ENCODE measurements at regions of chr6 and their contacts with region 1.

Region 1: GRCh38 chr6:50816115-50816675 is 2.5 kb upstream of the TFAP2B start:
- DNase-seq: peak; percentile 43
- H3K4me3 Mint-ChIP-seq: peak overlapping the region; percentile 83
- H3K27ac Mint-ChIP-seq: no peak overlapping the region
- H3K4me1 Mint-ChIP-seq: peaks cover 10% of the 10 kb centered on the region
- H3K27me3 Mint-ChIP-seq: peaks cover 46% of the 10 kb centered on the region

Region 2: GRCh38 chr6:50724381-50725124 is 91.6 kb before region 1 on chr6:
- intact Hi-C with region 1: loop called (anchors 2 kb)
- DNase-seq: no peak
- H3K4me3 Mint-ChIP-seq: no peak overlapping the region
- H3K27ac Mint-ChIP-seq: no peak overlapping the region
- H3K4me1 Mint-ChIP-seq: peaks cover 5% of the 10 kb centered on the region
- H3K27me3 Mint-ChIP-seq: peaks cover 45% of the 10 kb centered on the region

Region 3: GRCh38 chr6:50843842-50844241 is 27.6 kb after region 1 on chr6:
- intact Hi-C with region 1: loop called (anchors 1 kb)
- DNase-seq: no peak
- H3K4me3 Mint-ChIP-seq: no peak overlapping the region
- H3K27ac Mint-ChIP-seq: no peak overlapping the region
- H3K4me1 Mint-ChIP-seq: no peaks in the 10 kb centered on the region
- H3K27me3 Mint-ChIP-seq: peaks cover 89% of the 10 kb centered on the region

Region 4: GRCh38 chr6:50853934-50854333 is 37.7 kb after region 1 on chr6:
- intact Hi-C with region 1: no loop called
- DNase-seq: no peak
- H3K4me3 Mint-ChIP-seq: no peak overlapping the region
- H3K27ac Mint-ChIP-seq: no peak overlapping the region
- H3K4me1 Mint-ChIP-seq: no peaks in the 10 kb centered on the region
- H3K27me3 Mint-ChIP-seq: peaks cover 32% of the 10 kb centered on the region

Region 5: DNA sequence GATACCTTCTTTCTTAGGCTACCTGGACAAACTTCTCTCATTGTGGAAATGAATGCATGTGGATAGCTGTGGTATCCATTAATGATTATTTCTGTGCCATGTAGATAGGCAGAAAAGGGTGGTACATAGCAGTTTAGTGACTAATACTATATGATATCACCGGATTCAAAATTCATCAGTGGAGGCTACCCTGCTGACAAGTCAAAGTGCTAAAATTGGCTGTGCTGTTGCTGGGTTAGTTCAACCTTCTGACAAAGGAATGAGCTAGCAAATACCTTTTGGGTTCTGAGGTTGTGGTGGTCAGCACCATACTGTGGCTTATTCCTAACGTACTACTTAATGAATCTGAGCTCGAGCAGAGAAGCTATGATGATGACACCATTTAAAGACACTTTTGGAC is 111.6 kb after region 1 on chr6:
- intact Hi-C with region 1: no loop called
- DNase-seq: no peak
- H3K4me3 Mint-ChIP-seq: no peak overlapping the region
- H3K27ac Mint-ChIP-seq: no peak overlapping the region
- H3K4me1 Mint-ChIP-seq: no peaks in the 10 kb centered on the region
- H3K27me3 Mint-ChIP-seq: no peaks in the 10 kb centered on the region

Region 6: GRCh38 chr6:51350308-51350904 is 534.2 kb after region 1 on chr6:
- intact Hi-C with region 1: loop called (anchors 5 kb)
- DNase-seq: no peak
- H3K4me3 Mint-ChIP-seq: no peak overlapping the region
- H3K27ac Mint-ChIP-seq: no peak overlapping the region
- H3K4me1 Mint-ChIP-seq: no peaks in the 10 kb centered on the region
- H3K27me3 Mint-ChIP-seq: no peaks in the 10 kb centered on the region

Region 7: GRCh38 chr6:51753635-51754034 is 937.4 kb after region 1 on chr6:
- intact Hi-C with region 1: loop called (anchors 5 kb)
- DNase-seq: no peak
- H3K4me3 Mint-ChIP-seq: no peak overlapping the region
- H3K27ac Mint-ChIP-seq: no peak overlapping the region
- H3K4me1 Mint-ChIP-seq: no peaks in the 10 kb centered on the region
- H3K27me3 Mint-ChIP-seq: no peaks in the 10 kb centered on the region

Region 8: GRCh38 chr6:51959744-51960383 is 1143.7 kb after region 1 on chr6:
- intact Hi-C with region 1: loop called (anchors 2 kb)
- DNase-seq: peak; percentile 9
- H3K4me3 Mint-ChIP-seq: no peak overlapping the region
- H3K27ac Mint-ChIP-seq: no peak overlapping the region
- H3K4me1 Mint-ChIP-seq: no peaks in the 10 kb centered on the region
- H3K27me3 Mint-ChIP-seq: peaks cover 6% of the 10 kb centered on the region

Region 9: GRCh38 chr6:52020945-52021570 is 1204.9 kb after region 1 on chr6:
- intact Hi-C with region 1: loop called (anchors 5 kb)
- DNase-seq: no peak
- H3K4me3 Mint-ChIP-seq: no peak overlapping the region
- H3K27ac Mint-ChIP-seq: no peak overlapping the region
- H3K4me1 Mint-ChIP-seq: no peaks in the 10 kb centered on the region
- H3K27me3 Mint-ChIP-seq: peaks cover 2% of the 10 kb centered on the region

Measured in activated T-helper 2 cell treated with anti-CD3 and anti-CD28 coated beads, Interferon-gamma antibody, Interleukin-2, Interleukin-4, amounts not matched to agents 10 μg/mL and 5 μg/mL and 100 μg/mL, durations not matched to agents 14 hours and 24 hours and 36 hours (primary cell).